CD4-positive, alpha-beta T cell (primary cell): ENCODE measurements at regions of chr12 and their contacts with region 1.

Region 1: DNA sequence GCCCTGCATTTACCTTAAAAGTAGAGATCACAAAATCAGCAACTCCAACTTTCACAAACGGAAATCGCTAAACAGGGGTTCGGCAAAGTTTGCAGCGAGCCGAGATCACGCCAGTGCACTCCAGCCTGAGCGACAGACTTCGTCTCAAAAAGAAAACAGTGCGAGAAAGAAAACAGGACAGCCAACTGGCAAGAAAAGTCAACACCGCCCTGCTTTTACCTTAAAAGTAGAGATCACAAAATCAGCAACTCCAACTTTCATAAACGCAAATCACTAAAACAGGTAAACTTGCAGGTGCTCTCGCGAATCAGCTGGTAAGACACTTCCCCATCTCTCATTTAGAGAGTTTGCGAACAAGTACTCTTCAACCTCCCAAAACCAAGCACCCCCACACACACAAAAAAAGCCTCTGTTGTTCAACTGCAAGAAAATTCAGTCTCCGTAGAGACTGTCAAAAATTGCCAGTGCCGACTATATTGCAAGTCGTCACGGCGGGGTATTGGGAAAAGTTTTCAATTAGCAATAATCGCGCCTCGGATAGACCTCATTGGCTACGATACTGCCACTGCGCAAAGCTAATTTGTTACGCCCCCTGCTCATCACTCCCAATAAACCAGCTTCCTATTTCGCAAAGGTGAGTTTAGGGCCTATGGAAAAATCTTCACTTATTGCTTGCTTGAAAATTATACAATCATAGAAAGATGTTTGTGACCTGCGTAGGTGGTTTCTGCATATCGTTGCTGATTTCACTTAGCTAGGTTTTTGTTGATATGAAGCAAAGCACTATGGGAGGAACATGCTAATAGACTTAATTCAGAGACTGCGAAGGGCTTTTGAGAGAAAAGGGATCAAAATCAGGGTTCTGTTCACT is at the start of gene RNU4-1:
- DNase-seq: peak; percentile 49 to 92 (median 64)
- ATAC-seq: peak; percentile 51
- H3K4me3 ChIP-seq: peak within 1 kb of the TSS; percentile 75
- H3K4me3 Mint-ChIP-seq: no peak within 1 kb of the TSS
- H3K27ac ChIP-seq: peak within 1 kb of the TSS; percentile 99 to 100
- H3K27ac Mint-ChIP-seq: no peak within 1 kb of the TSS
- H3K4me1 ChIP-seq: peaks cover 23% of the 10 kb centered on the region
- H3K4me1 Mint-ChIP-seq: peaks cover 5% of the 10 kb centered on the region
- H3K27me3 ChIP-seq: no peaks in the 10 kb centered on the region
- H3K27me3 Mint-ChIP-seq: no peaks in the 10 kb centered on the region
- CTCF ChIP-seq: no peak
- total RNA-seq, gene RNU4-1: 913 to 1,035 TPM

Region 2: DNA sequence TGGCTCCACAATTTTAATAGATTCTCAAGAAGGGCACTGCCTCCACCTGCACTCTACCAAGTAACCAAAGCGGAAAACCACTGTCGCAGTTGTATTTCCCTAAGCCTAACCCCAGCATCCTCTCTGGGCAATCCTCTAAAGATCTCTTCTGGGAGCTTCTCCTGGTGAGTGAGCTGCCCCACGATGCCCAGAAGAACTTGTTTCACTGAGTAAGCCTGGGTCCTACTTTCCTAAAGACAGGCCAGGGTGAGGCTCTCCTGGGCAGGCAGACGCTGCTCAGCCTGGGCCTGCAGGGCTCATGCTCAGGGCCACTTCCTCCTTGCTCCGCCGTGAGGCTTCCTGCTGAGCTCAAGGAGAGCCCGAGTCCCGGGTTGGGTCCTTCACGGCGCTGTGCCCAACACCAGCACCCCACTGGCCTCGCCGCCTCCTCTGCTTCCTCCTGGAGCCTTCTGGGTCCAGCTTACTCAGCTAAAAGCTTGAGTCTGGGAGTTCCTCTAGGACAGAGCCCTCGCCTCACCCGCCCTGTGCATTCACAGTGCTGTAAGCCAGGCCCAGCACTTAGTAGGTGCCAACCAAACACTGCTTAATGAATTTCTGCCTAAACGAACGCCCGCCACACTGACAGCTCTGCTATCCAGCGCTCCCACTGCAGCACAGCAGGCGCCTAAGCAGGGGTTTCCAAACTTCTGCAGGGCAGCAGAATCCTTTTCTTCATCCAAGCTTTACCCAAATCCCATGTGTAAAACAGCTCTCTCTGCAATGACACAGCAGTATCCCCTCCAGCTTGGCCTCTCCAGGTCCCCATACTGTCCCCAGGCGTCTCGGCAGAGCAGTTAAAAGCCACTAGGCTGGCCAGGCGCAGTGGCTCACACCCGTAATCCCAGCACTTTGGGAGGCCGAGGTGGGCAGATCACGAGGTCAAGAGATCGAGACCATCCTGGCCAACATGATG is 182.1 kb before region 1 on chr12:
- CTCF ChIA-PET with region 1: no interaction called
- POLR2A ChIA-PET with region 1: interaction called, 32 read pairs
- intact Hi-C with region 1: no loop called
- DNase-seq: peak; percentile 23 to 76 (median 46)
- ATAC-seq: peak; percentile 82
- H3K4me3 ChIP-seq: peak overlapping the region; percentile 29
- H3K4me3 Mint-ChIP-seq: peak overlapping the region; percentile 74
- H3K27ac ChIP-seq: peak overlapping the region; percentile 21 to 26
- H3K27ac Mint-ChIP-seq: peak overlapping the region; percentile 75
- H3K4me1 ChIP-seq: peaks cover 71% of the 10 kb centered on the region
- H3K4me1 Mint-ChIP-seq: peaks cover 72% of the 10 kb centered on the region
- H3K27me3 ChIP-seq: no peaks in the 10 kb centered on the region
- H3K27me3 Mint-ChIP-seq: no peaks in the 10 kb centered on the region
- CTCF ChIP-seq: no peak

Region 3: DNA sequence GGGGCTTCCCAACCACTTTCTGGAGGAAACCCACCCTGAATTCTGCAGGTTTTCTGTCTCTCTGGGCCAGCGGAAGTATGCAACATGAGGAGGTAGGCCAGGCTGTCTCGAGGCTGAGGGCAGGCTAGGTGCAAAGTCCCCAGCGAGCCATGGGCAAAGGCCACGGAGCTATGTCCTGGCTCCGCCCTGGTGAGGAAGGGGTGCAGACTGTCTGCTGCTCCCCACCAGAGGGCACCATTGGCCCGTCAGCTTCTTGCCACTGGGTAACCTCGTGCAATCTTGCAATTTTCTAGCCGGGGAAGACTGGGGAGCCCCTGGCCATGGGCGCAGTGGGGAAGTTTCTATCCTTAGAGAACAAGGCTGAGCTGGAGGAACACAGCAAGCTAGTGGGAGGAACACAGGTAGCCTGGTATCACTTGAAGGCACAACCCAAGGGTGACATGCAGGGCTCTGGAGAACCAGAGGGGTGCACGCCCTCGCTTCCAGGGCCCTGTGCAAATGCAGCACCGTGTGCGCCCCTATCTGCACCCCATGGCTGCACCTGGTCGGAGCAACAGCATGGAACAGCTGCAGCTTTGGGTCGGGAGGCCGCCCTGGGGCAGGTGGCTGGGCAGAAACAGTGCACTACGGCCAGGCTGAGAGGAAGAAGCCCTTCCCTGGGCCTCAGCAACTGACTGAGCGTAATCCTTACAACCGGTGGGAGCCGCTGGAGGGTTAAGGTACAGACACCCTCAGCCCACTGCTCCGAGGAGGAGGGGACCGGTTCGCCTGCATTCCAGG is 64.4 kb before region 1 on chr12:
- CTCF ChIA-PET with region 1: interaction called, 11 read pairs
- POLR2A ChIA-PET with region 1: interaction called, 159 read pairs
- intact Hi-C with region 1: no loop called
- DNase-seq: peak; percentile 83 to 94 (median 88)
- ATAC-seq: peak; percentile 69
- H3K4me3 ChIP-seq: peak overlapping the region; percentile 28
- H3K4me3 Mint-ChIP-seq: peak overlapping the region; percentile 65
- H3K27ac ChIP-seq: peak overlapping the region in 1 of 2 donors; percentile 26
- H3K27ac Mint-ChIP-seq: peak overlapping the region; percentile 70
- H3K4me1 ChIP-seq: peaks cover 95% of the 10 kb centered on the region
- H3K4me1 Mint-ChIP-seq: peaks cover 91% of the 10 kb centered on the region
- H3K27me3 ChIP-seq: no peaks in the 10 kb centered on the region
- H3K27me3 Mint-ChIP-seq: no peaks in the 10 kb centered on the region
- CTCF ChIP-seq: peak; percentile 93

Region 4: GRCh38 chr12:120249875-120250795 is 42.8 kb before region 1 on chr12:
- CTCF ChIA-PET with region 1: no interaction called
- POLR2A ChIA-PET with region 1: interaction called, 198 read pairs
- intact Hi-C with region 1: loop called in 1 of 2 experiments (anchors 1 kb)
- DNase-seq: peak in 6 of 14 experiments; percentile 20 to 85 (median 55)
- ATAC-seq: no peak
- H3K4me3 ChIP-seq: peak overlapping the region; percentile 40
- H3K4me3 Mint-ChIP-seq: peak overlapping the region; percentile 72
- H3K27ac ChIP-seq: peak overlapping the region; percentile 35 to 59
- H3K27ac Mint-ChIP-seq: peak overlapping the region; percentile 95
- H3K4me1 ChIP-seq: peaks cover 84% of the 10 kb centered on the region
- H3K4me1 Mint-ChIP-seq: peaks cover 85% of the 10 kb centered on the region
- H3K27me3 ChIP-seq: no peaks in the 10 kb centered on the region
- H3K27me3 Mint-ChIP-seq: no peaks in the 10 kb centered on the region
- CTCF ChIP-seq: no peak

Region 5: DNA sequence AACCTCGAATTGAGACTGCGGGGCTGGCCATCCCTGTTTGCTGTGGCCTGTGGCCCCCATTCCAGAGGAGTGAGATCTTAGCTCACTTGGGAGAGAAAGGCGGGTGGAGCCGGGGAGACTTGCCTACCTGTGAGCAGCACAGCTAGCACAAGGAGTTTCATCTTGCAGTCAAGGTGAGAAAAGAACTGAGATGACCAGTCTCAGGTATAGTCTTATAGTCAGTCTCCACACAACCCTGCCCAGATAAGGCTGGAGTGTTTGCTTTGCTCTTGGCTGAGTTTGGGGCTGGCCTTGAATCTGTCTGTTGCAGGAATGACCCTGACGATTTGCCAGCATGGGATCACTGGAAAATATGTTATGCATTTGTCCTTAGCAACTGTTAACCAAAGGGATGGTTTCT is 34.7 kb after region 1 on chr12 and contains the start of gene PLA2G1B:
- CTCF ChIA-PET with region 1: no interaction called
- POLR2A ChIA-PET with region 1: interaction called, 13 read pairs
- intact Hi-C with region 1: no loop called
- DNase-seq: no peak
- ATAC-seq: no peak
- H3K4me3 ChIP-seq: no peak within 1 kb of the TSS
- H3K4me3 Mint-ChIP-seq: peak within 1 kb of the TSS; percentile 7
- H3K27ac ChIP-seq: no peak within 1 kb of the TSS
- H3K27ac Mint-ChIP-seq: no peak within 1 kb of the TSS
- H3K4me1 ChIP-seq: peaks cover 12% of the 10 kb centered on the region
- H3K4me1 Mint-ChIP-seq: peaks cover 6% of the 10 kb centered on the region
- H3K27me3 ChIP-seq: peaks cover 4 to 5% of the 10 kb centered on the region in 2 experiments
- H3K27me3 Mint-ChIP-seq: peaks cover 4% of the 10 kb centered on the region
- CTCF ChIP-seq: no peak
- total RNA-seq, gene PLA2G1B: not detected

Region 6: GRCh38 chr12:120428597-120429229 is 135.8 kb after region 1 on chr12:
- CTCF ChIA-PET with region 1: no interaction called
- POLR2A ChIA-PET with region 1: no interaction called
- intact Hi-C with region 1: no loop called
- DNase-seq: no peak
- ATAC-seq: no peak
- H3K4me3 ChIP-seq: no peak overlapping the region
- H3K4me3 Mint-ChIP-seq: no peak overlapping the region
- H3K27ac ChIP-seq: no peak overlapping the region
- H3K27ac Mint-ChIP-seq: no peak overlapping the region
- H3K4me1 ChIP-seq: peaks cover 6% of the 10 kb centered on the region
- H3K4me1 Mint-ChIP-seq: peaks cover 4% of the 10 kb centered on the region
- H3K27me3 ChIP-seq: no peaks in the 10 kb centered on the region
- H3K27me3 Mint-ChIP-seq: peaks cover 5% of the 10 kb centered on the region
- CTCF ChIP-seq: no peak

Region 7: DNA sequence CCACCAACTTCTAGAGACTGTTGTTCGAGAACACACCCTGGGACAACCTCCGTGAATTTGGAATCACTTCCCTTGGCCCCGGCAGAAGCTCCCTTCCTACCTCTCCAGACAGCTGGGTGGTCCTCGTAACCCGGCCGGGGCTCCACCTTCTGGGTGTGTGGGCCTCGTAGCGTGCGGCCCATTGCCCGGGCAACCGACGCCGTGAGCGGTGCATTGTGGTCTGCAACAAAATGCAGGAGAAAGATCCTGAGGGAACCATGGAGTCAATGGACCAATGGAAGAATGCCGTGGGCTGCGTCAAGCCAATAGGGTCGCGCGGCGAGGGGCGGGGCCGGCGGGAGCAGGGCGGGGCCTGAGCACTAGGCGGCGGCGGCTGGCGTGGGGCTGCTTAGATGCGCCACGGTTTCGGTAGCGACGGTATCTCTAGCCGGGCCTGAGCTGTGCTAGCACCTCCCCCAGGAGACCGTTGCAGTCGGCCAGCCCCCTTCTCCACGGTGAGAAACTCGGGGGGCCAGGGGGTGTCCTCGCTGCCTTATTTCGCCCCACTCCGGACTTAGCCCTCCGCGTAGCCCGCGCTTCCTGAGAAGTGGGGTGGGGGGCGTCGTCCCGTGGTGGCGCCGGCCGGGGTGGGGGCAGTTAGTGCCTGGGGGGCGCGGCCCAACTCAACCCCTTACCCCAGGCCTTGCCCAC is 203.0 kb after region 1 on chr12 and contains the start of gene DYNLL1:
- CTCF ChIA-PET with region 1: no interaction called
- POLR2A ChIA-PET with region 1: interaction called, 15 read pairs
- intact Hi-C with region 1: no loop called
- DNase-seq: peak; percentile 95 to 98 (median 97)
- ATAC-seq: peak; percentile 96
- H3K4me3 ChIP-seq: peak within 1 kb of the TSS; percentile 82
- H3K4me3 Mint-ChIP-seq: peak within 1 kb of the TSS; percentile 92
- H3K27ac ChIP-seq: peak within 1 kb of the TSS; percentile 74 to 79
- H3K27ac Mint-ChIP-seq: peak within 1 kb of the TSS; percentile 82
- H3K4me1 ChIP-seq: peaks cover 18% of the 10 kb centered on the region
- H3K4me1 Mint-ChIP-seq: peaks cover 44% of the 10 kb centered on the region
- H3K27me3 ChIP-seq: no peaks in the 10 kb centered on the region
- H3K27me3 Mint-ChIP-seq: no peaks in the 10 kb centered on the region
- CTCF ChIP-seq: no peak
- total RNA-seq, gene DYNLL1: 23.6 to 24.5 TPM